ENCODE measurements at regions of chr15 and their contacts with region 1.

Region 1: DNA sequence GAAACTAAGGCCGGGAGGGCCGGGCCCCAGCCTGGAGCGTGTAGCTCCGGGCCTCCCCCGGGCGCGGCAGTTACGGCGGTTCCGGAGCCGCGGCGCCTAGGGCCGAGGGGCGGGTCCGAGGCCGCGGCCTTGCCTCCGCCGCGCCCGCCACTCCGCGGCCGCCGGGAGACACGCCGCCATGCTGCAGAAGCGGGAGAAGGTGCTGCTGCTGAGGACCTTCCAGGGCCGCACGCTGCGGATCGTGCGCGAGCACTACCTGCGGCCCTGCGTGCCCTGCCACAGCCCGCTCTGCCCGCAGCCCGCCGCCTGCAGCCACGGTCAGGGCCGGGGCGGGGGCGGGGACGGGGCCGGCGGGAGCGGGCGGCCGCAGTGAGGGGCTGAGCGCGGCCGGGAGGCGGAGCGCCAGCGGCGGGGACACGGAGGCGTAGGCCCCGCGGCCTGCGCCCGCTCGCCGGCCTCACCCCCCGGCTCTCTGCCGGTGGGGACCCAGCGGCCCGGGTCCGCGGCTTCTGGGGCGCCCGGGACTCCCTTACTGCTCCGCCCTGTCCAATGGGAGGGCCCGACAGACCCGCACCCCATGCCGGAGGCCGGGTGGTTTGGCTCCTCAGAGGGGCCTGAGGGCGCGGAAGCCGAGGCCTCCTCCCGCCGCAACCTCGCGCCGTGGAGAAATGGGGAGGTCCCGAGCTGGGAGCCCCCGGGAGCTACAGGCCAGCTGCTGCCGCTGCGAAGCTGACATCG is at the start of gene DIS3L:
- DNase-seq: peak; percentile 69
- H3K4me3 Mint-ChIP-seq: peak within 1 kb of the TSS; percentile 89
- H3K27ac Mint-ChIP-seq: peak within 1 kb of the TSS; percentile 94
- H3K4me1 Mint-ChIP-seq: peaks cover 35% of the 10 kb centered on the region
- H3K27me3 Mint-ChIP-seq: no peaks in the 10 kb centered on the region
- total RNA-seq, gene DIS3L: 47.7 and 56.0 TPM in 2 replicates

Region 2: GRCh38 chr15:65869127-65869953 is 424.2 kb before region 1 on chr15 and contains the start of gene RAB11A:
- intact Hi-C with region 1: loop called (anchors 5 kb)
- DNase-seq: peak; percentile 94
- H3K4me3 Mint-ChIP-seq: peak within 1 kb of the TSS; percentile 99
- H3K27ac Mint-ChIP-seq: peak within 1 kb of the TSS; percentile 93
- H3K4me1 Mint-ChIP-seq: peaks cover 31% of the 10 kb centered on the region
- H3K27me3 Mint-ChIP-seq: peaks cover 4% of the 10 kb centered on the region
- total RNA-seq, gene RAB11A: 161 and 171 TPM in 2 replicates

Region 3: GRCh38 chr15:66356345-66357236 is 63.0 kb after region 1 on chr15 and contains the start of gene TIPIN:
- intact Hi-C with region 1: loop called (anchors 1 kb)
- DNase-seq: peak; percentile 96
- H3K4me3 Mint-ChIP-seq: peak within 1 kb of the TSS; percentile 96
- H3K27ac Mint-ChIP-seq: peak within 1 kb of the TSS; percentile 97
- H3K4me1 Mint-ChIP-seq: peaks cover 35% of the 10 kb centered on the region
- H3K27me3 Mint-ChIP-seq: no peaks in the 10 kb centered on the region
- total RNA-seq, gene TIPIN: 49.2 and 56.0 TPM in 2 replicates

Region 4: GRCh38 chr15:66497502-66498455 is 204.2 kb after region 1 on chr15 and contains the start of gene SNAPC5:
- intact Hi-C with region 1: loop called (anchors 2 kb)
- DNase-seq: peak; percentile 97
- H3K4me3 Mint-ChIP-seq: peak within 1 kb of the TSS; percentile 98
- H3K27ac Mint-ChIP-seq: peak within 1 kb of the TSS; percentile 94
- H3K4me1 Mint-ChIP-seq: peaks cover 52% of the 10 kb centered on the region
- H3K27me3 Mint-ChIP-seq: no peaks in the 10 kb centered on the region
- total RNA-seq, gene SNAPC5: 37.3 and 39.0 TPM in 2 replicates

Region 5: DNA sequence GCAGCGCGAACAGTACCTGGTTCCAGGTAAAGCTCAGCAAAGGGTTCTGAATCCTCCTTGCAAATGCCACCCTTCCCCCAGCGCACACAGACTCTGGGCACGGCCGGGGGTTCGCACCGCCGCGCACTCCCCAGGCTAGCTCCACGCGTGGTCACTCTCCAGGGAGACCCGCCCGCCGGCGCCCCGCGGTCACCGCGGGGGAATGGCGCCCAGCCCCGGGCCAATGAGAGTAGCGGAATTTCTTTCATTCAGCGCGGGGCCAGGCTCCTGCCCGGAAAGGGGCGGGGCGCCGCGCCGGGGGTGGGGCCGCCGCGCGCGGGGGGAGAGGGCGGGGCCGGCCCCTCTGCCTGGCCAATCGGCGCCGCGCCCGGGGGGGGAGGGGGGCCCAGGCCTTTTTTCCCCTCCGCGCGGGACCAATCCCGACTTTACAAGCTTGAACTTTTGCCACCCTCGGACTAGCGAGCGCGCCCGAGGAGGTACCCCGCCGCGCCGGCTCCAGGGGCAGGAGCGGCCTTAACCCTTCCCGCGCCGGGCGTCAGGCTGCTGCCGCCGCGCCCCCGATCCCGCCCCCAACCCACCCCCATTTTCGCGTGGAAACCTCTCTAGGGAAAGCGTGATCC is 407.3 kb after region 1 on chr15:
- intact Hi-C with region 1: loop called (anchors 5 kb)
- DNase-seq: peak; percentile 85
- H3K4me3 Mint-ChIP-seq: peak overlapping the region; percentile 85
- H3K27ac Mint-ChIP-seq: peak overlapping the region; percentile 61
- H3K4me1 Mint-ChIP-seq: peaks cover 16% of the 10 kb centered on the region
- H3K27me3 Mint-ChIP-seq: peaks cover 21% of the 10 kb centered on the region